Activated CD4-positive, alpha-beta T cell treated with anti-CD3 and anti-CD28 coated beads, Interleukin-2, amount 10 ng/mL, durations not matched to agents 24 days and 14 days (primary cell): ENCODE measurements at regions of chr5 and their contacts with region 1.

Region 1: DNA sequence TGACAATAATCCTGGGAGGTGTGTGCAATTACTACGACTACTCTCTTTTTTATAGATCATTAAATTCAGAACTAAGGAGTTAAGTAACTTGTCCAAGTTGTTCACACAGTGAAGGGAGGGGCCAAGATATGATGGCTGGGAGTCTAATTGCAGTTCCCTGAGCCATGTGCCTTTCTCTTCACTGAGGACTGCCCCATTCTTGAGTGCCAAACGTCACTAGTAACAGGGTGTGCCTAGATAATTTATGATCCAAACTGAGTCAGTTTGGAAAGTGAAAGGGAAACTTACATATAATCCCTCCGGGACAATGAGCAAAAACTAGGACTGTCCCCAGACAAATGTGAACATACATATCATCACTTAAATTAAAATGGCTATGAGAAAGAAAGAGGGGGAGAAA is 20.2 kb downstream of the IL7R start:
- DNase-seq: no peak
- H3K4me3 Mint-ChIP-seq: no peak overlapping the region
- H3K27ac Mint-ChIP-seq: peak overlapping the region; percentile 74
- H3K4me1 Mint-ChIP-seq: peaks cover 51% of the 10 kb centered on the region
- H3K27me3 Mint-ChIP-seq: no peaks in the 10 kb centered on the region

Region 2: GRCh38 chr5:35030426-35031100 is 846.4 kb before region 1 on chr5:
- intact Hi-C with region 1: no loop called
- DNase-seq: no peak
- H3K4me3 Mint-ChIP-seq: no peak overlapping the region
- H3K27ac Mint-ChIP-seq: no peak overlapping the region
- H3K4me1 Mint-ChIP-seq: no peaks in the 10 kb centered on the region
- H3K27me3 Mint-ChIP-seq: peaks cover 9% of the 10 kb centered on the region

Region 3: GRCh38 chr5:35863159-35863558 is 13.8 kb before region 1 on chr5:
- intact Hi-C with region 1: loop called (anchors 2 kb)
- DNase-seq: peak; percentile 69
- H3K4me3 Mint-ChIP-seq: peak overlapping the region; percentile 87
- H3K27ac Mint-ChIP-seq: peak overlapping the region; percentile 88
- H3K4me1 Mint-ChIP-seq: peaks cover 68% of the 10 kb centered on the region
- H3K27me3 Mint-ChIP-seq: no peaks in the 10 kb centered on the region